Caco-2 (cell line): ENCODE measurements at regions of chr9 and their contacts with region 1.

Region 1: GRCh38 chr9:106921341-106921899 is 58.5 kb downstream of the ZNF462 start:
- DNase-seq: peak; percentile 87 to 93
- H3K4me3 ChIP-seq: peak overlapping the region; percentile 22
- H3K4me3 Mint-ChIP-seq: peak overlapping the region; percentile 85
- H3K27ac Mint-ChIP-seq: peak overlapping the region; percentile 100
- H3K4me1 ChIP-seq: peaks cover 66% of the 10 kb centered on the region
- H3K4me1 Mint-ChIP-seq: peaks cover 47% of the 10 kb centered on the region
- H3K27me3 ChIP-seq: no peaks in the 10 kb centered on the region
- H3K27me3 Mint-ChIP-seq: no peaks in the 10 kb centered on the region
- CTCF ChIP-seq: no peak

Region 2: DNA sequence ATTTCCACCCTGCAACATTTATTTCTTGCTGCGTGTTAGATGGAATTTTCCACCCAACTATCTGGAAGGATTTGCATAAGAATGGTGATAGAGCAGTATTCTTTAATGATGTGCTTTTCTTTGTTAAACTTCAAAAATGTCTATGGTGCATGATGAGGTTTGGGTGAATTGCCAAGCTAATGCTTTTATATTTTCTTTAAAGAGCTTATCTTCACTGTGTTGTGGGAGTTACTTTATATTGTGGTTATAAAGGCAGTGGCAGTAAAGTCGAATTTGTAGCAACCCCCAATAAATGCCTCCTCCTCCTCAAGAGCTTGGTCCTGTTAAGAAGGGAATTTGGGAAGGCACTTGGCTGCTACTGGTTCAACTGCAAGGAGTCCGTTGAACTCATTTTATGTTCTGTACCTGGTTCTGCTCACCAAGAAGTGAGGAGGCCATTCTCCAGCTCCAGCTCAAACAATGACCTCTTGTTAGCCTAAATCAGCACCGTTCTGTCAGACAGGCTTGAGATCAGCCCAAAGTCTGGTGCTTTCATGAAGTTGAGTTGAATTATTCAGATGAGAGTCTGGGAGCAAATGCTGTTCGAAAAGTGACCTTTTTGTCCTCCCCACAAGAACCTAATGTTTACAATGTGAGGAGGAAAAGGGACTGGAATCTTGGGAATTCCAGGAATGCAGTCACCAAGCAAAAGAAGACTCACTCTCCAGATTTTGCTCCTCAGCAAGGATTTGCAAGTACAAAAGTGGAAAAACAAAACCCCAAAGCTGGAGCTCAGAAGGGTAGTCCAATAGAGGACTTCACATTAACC is 1010.1 kb before region 1 on chr9:
- CTCF ChIA-PET with region 1: no interaction called
- POLR2A ChIA-PET with region 1: no interaction called
- intact Hi-C with region 1: loop called (anchors 1 kb)
- DNase-seq: peak; percentile 61 to 68
- H3K4me3 ChIP-seq: no peak overlapping the region
- H3K4me3 Mint-ChIP-seq: peak overlapping the region; percentile 54
- H3K27ac Mint-ChIP-seq: peak overlapping the region; percentile 93
- H3K4me1 ChIP-seq: peaks cover 40% of the 10 kb centered on the region
- H3K4me1 Mint-ChIP-seq: peaks cover 34% of the 10 kb centered on the region
- H3K27me3 ChIP-seq: no peaks in the 10 kb centered on the region
- H3K27me3 Mint-ChIP-seq: no peaks in the 10 kb centered on the region
- CTCF ChIP-seq: no peak

Region 3: GRCh38 chr9:106869458-106869857 is 52.0 kb before region 1 on chr9:
- CTCF ChIA-PET with region 1: no interaction called
- POLR2A ChIA-PET with region 1: interaction called, 5 read pairs
- intact Hi-C with region 1: loop called (anchors 1 kb)
- DNase-seq: no peak
- H3K4me3 ChIP-seq: no peak overlapping the region
- H3K4me3 Mint-ChIP-seq: no peak overlapping the region
- H3K27ac Mint-ChIP-seq: no peak overlapping the region
- H3K4me1 ChIP-seq: 0 out of 2 replicates have a peak, but pooled peaks cover 9% of the 10 kb centered on the region
- H3K4me1 Mint-ChIP-seq: peaks cover 12% of the 10 kb centered on the region
- H3K27me3 ChIP-seq: no peaks in the 10 kb centered on the region
- H3K27me3 Mint-ChIP-seq: no peaks in the 10 kb centered on the region
- CTCF ChIP-seq: no peak

Region 4: GRCh38 chr9:106892632-106893031 is 28.8 kb before region 1 on chr9:
- CTCF ChIA-PET with region 1: interaction called, 3 read pairs
- POLR2A ChIA-PET with region 1: no interaction called
- intact Hi-C with region 1: loop called (anchors 1 kb)
- DNase-seq: peak; percentile 84 to 90
- H3K4me3 ChIP-seq: no peak overlapping the region
- H3K4me3 Mint-ChIP-seq: peak overlapping the region; percentile 40
- H3K27ac Mint-ChIP-seq: peak overlapping the region; percentile 92
- H3K4me1 ChIP-seq: peaks cover 61% of the 10 kb centered on the region
- H3K4me1 Mint-ChIP-seq: peaks cover 43% of the 10 kb centered on the region
- H3K27me3 ChIP-seq: no peaks in the 10 kb centered on the region
- H3K27me3 Mint-ChIP-seq: no peaks in the 10 kb centered on the region
- CTCF ChIP-seq: no peak

Region 5: GRCh38 chr9:107020040-107020530 is 98.7 kb after region 1 on chr9:
- CTCF ChIA-PET with region 1: no interaction called
- POLR2A ChIA-PET with region 1: no interaction called
- intact Hi-C with region 1: no loop called
- DNase-seq: no peak
- H3K4me3 ChIP-seq: no peak overlapping the region
- H3K4me3 Mint-ChIP-seq: no peak overlapping the region
- H3K27ac Mint-ChIP-seq: no peak overlapping the region
- H3K4me1 ChIP-seq: no peaks in the 10 kb centered on the region
- H3K4me1 Mint-ChIP-seq: no peaks in the 10 kb centered on the region
- H3K27me3 ChIP-seq: no peaks in the 10 kb centered on the region
- H3K27me3 Mint-ChIP-seq: no peaks in the 10 kb centered on the region
- CTCF ChIP-seq: no peak

Region 6: DNA sequence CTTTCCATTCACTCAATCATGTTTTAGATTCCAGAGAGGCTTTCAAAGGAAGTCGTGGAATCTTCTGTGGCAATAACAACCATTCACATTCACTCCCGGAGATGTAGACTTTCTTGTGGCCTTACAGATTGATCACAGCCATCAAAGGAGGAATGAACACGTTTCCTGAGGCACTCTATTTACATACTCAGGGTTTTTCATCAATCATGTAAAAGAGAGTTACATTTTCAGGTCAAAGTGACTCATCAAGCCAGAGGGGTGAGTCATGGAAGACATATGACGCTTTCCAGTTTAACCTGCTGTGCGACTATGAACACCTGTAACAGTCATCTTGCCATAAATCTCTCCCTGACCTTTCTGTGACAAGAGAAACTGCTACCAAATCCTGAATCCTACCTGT is 322.3 kb after region 1 on chr9:
- CTCF ChIA-PET with region 1: no interaction called
- POLR2A ChIA-PET with region 1: no interaction called
- intact Hi-C with region 1: loop called (anchors 5 kb)
- DNase-seq: peak; percentile 87 to 89
- H3K4me3 ChIP-seq: no peak overlapping the region
- H3K4me3 Mint-ChIP-seq: peak overlapping the region; percentile 58
- H3K27ac Mint-ChIP-seq: peak overlapping the region; percentile 89
- H3K4me1 ChIP-seq: peaks cover 72% of the 10 kb centered on the region
- H3K4me1 Mint-ChIP-seq: peaks cover 34% of the 10 kb centered on the region
- H3K27me3 ChIP-seq: no peaks in the 10 kb centered on the region
- H3K27me3 Mint-ChIP-seq: no peaks in the 10 kb centered on the region
- CTCF ChIP-seq: no peak